Colonic mucosa (tissue), 4 donors: ENCODE measurements at regions of chr9 and their contacts with region 1.

Region 1: GRCh38 chr9:128523199-128523925 is 18.8 kb downstream of the GLE1 start:
- DNase-seq: no peak
- H3K4me3 ChIP-seq: no peak overlapping the region
- H3K27ac ChIP-seq: no peak overlapping the region
- H3K4me1 ChIP-seq: no peaks in the 10 kb centered on the region
- H3K27me3 ChIP-seq: no peaks in the 10 kb centered on the region
- CTCF ChIP-seq: no peak

Region 2: DNA sequence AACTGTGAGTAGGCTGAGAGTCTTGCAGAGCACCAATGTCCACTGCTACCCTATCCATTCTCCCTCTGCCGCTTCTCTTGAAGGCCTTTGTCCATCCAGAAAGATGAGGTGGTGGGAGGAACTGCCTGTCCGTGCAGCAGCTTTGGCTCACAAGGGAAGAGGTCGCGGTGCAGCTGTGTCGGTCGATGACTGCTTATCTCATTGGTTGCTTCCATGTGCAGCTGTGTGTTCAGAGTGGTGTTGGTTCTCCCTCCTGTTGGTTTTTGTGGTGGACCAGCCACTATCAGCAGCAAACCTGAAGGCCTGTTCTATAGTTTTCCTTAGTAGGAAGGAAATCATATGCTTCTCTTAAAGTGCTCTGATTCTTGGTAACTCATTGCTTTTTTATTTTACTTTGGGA is 69.7 kb after region 1 on chr9:
- intact Hi-C with region 1: loop called (anchors 10 kb)
- DNase-seq: no peak
- H3K4me3 ChIP-seq: no peak overlapping the region
- H3K27ac ChIP-seq: no peak overlapping the region
- H3K4me1 ChIP-seq: no peaks in the 10 kb centered on the region
- H3K27me3 ChIP-seq: no peaks in the 10 kb centered on the region
- CTCF ChIP-seq: no peak

Region 3: DNA sequence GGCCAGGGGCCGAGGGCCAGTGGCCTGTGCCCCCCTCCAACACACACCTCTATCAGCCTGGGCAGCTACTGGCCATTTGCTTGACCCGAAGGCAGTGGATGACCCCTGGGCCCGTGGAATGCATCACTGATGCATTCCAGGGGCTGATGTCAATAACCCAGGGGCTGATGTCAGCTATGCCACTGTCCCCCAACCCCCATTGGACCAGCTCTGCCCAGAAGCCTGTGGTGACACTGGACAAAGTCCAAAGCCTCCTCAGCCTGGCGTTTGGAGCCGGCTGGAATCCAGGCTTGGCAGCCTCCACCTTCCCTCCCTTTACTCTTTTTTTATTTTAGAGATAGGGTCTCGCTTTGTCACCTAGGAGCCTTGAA is 352.4 kb after region 1 on chr9:
- intact Hi-C with region 1: no loop called
- DNase-seq: no peak
- H3K4me3 ChIP-seq: no peak overlapping the region
- H3K27ac ChIP-seq: no peak overlapping the region
- H3K4me1 ChIP-seq: no peaks in the 10 kb centered on the region
- H3K27me3 ChIP-seq: no peaks in the 10 kb centered on the region
- CTCF ChIP-seq: no peak

Region 4: GRCh38 chr9:129028192-129028957 is 505.0 kb after region 1 on chr9 and contains the start of gene SH3GLB2:
- intact Hi-C with region 1: no loop called
- DNase-seq: peak; percentile 97
- H3K4me3 ChIP-seq: peak within 1 kb of the TSS; percentile 93
- H3K27ac ChIP-seq: peak within 1 kb of the TSS; percentile 84
- H3K4me1 ChIP-seq: peaks cover 10% of the 10 kb centered on the region
- H3K27me3 ChIP-seq: no peaks in the 10 kb centered on the region
- CTCF ChIP-seq: peak; percentile 86
- total RNA-seq, gene SH3GLB2: 109 to 110 TPM